Activated naive CD4-positive, alpha-beta T cell treated with anti-CD3 and anti-CD28 coated beads for 36 hours (primary cell): ENCODE measurements at regions of chr10 and their contacts with region 1.

Region 1: GRCh38 chr10:14185316-14186045 is 145.2 kb downstream of the FRMD4A start:
- DNase-seq: peak; percentile 73
- H3K4me3 Mint-ChIP-seq: peak overlapping the region; percentile 61
- H3K27ac Mint-ChIP-seq: peak overlapping the region; percentile 96
- H3K4me1 Mint-ChIP-seq: peaks cover 29% of the 10 kb centered on the region
- H3K27me3 Mint-ChIP-seq: peaks cover 27% of the 10 kb centered on the region

Region 2: DNA sequence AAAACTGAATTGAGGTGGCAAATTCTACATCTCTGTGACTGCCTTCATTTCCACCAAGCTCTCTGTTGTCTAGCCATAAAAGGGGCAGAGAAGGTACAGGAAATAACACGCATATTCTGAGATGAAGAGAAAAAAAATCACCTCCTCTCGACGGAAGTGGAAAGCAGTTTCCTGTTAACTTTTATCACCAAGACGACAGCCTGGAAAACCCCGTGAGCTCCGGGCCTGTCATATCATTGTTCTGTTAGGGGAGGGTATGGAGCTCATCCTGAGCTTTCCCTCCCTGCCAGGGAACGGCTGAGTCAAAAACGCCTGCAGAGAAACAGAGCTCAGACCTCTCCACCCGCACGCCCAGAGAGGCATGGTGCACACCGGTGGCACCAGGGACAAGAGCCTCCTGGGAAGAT is 398.5 kb before region 1 on chr10:
- CTCF ChIA-PET with region 1: interaction called, 6 read pairs
- intact Hi-C with region 1: loop called (anchors 1 kb)
- DNase-seq: peak; percentile 92
- H3K4me3 Mint-ChIP-seq: peak overlapping the region; percentile 45
- H3K27ac Mint-ChIP-seq: peak overlapping the region; percentile 93
- H3K4me1 Mint-ChIP-seq: peaks cover 33% of the 10 kb centered on the region
- H3K27me3 Mint-ChIP-seq: no peaks in the 10 kb centered on the region

Region 3: DNA sequence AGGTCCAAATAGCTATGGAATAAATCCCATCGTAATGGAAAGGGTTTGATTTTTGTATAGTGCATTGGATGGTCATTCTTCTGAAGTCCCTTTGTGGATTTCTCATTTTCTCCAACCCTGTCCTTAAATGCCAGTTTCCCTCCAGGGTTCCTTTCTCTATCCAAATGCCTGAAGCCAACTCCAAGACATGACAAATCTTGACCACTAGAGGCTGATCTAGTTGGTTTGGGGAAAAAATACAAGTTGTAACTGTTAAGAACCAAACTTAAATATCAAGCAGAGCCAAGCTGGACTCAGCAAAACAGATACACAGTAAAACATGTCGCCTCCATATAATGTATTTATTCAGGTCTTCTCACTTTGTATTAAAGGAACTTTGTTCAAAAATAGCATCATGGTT is 116.6 kb after region 1 on chr10:
- CTCF ChIA-PET with region 1: no interaction called
- intact Hi-C with region 1: no loop called
- DNase-seq: no peak
- H3K4me3 Mint-ChIP-seq: no peak overlapping the region
- H3K27ac Mint-ChIP-seq: no peak overlapping the region
- H3K4me1 Mint-ChIP-seq: no peaks in the 10 kb centered on the region
- H3K27me3 Mint-ChIP-seq: peaks cover 6% of the 10 kb centered on the region

Region 4: GRCh38 chr10:14385596-14386593 is 200.4 kb after region 1 on chr10:
- CTCF ChIA-PET with region 1: interaction called, 5 read pairs
- intact Hi-C with region 1: loop called (anchors 1 kb)
- DNase-seq: peak; percentile 67
- H3K4me3 Mint-ChIP-seq: no peak overlapping the region
- H3K27ac Mint-ChIP-seq: no peak overlapping the region
- H3K4me1 Mint-ChIP-seq: peaks cover 80% of the 10 kb centered on the region
- H3K27me3 Mint-ChIP-seq: peaks cover 3% of the 10 kb centered on the region

Region 5: DNA sequence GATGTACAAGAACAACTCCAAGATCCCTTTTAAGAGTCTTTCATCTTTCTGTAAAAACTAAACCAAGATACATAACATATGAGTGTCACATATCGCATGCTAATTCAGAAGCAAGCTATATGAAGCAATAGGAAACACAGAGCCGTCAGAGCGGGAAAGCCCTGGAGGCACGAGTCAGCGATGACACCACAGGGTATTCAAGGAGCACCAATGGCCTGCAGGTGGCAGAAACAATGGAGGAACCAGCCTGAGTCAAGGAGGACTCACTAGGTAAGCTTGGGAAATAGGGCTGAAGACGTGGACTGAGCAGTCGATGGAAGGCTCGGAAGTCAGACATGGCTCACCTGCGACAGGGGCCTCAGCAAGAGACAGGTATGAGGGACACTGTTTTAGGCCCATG is 374.8 kb after region 1 on chr10:
- CTCF ChIA-PET with region 1: no interaction called
- intact Hi-C with region 1: loop called (anchors 2 kb)
- DNase-seq: peak; percentile 94
- H3K4me3 Mint-ChIP-seq: peak overlapping the region; percentile 13
- H3K27ac Mint-ChIP-seq: peak overlapping the region; percentile 88
- H3K4me1 Mint-ChIP-seq: peaks cover 91% of the 10 kb centered on the region
- H3K27me3 Mint-ChIP-seq: no peaks in the 10 kb centered on the region

Region 6: DNA sequence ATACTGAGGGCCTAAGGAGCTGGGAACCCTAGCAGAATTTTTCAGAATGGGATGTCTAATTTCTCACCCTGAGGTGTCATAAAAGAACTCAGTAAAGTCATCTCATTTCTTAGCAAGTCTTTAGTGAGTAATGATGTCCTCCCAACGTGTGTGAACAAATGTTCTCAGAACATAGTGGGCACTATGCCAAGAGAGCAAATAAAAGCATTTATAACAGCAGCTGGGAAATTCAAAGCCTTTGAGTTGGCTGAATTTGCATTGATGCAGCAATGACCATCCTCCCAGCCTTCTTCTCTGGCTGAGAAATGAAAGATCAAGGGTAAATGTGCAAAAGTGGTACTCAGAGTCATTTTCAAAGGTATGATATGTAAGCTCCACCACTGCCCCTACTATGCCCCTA is 479.8 kb after region 1 on chr10:
- CTCF ChIA-PET with region 1: no interaction called
- intact Hi-C with region 1: loop called (anchors 5 kb)
- DNase-seq: peak; percentile 65
- H3K4me3 Mint-ChIP-seq: no peak overlapping the region
- H3K27ac Mint-ChIP-seq: peak overlapping the region; percentile 78
- H3K4me1 Mint-ChIP-seq: peaks cover 53% of the 10 kb centered on the region
- H3K27me3 Mint-ChIP-seq: no peaks in the 10 kb centered on the region

Region 7: DNA sequence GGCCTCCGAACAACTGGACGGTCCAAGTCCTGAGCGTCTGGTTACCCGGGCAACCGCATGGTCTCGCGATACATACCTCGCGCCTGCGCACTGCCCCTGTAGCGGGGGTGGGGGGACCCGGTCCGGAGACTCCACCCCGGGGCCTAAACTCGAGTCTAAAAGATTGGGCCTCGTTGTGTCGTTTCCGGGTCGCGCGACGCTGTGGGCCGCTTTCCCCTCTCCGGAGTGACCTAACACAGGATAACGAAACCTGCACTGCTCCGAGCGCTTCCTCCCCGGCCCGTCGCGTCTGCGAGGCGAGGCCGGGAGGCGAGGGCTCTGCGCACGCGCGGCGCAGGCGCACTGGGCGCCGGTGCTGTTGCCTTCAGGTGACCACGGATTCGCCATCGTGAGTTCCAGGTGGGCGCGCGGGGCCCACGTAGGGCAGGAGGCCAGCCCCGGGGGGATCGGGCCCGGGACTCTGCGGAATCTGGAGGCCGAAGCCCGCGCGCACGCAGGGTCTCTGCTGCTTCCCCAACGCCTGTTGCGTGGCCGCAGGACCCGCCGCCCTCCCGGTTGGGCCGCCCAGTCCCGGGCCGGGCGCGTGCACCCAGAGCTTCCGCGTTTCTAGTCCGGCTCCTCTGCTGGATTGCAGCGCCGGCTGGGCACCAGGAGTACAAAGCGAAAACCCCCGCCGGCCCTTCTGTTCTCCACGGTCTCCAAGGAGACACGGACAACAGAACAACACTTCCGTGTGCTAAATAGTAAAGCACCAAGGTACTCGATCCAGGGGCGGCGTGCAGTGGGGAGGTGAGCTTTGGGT is 911.7 kb after region 1 on chr10 and contains the start of gene RPP38:
- CTCF ChIA-PET with region 1: no interaction called
- intact Hi-C with region 1: loop called (anchors 10 kb)
- DNase-seq: peak; percentile 96
- H3K4me3 Mint-ChIP-seq: peak within 1 kb of the TSS; percentile 97
- H3K27ac Mint-ChIP-seq: peak within 1 kb of the TSS; percentile 94
- H3K4me1 Mint-ChIP-seq: peaks cover 36% of the 10 kb centered on the region
- H3K27me3 Mint-ChIP-seq: no peaks in the 10 kb centered on the region
- total RNA-seq, gene RPP38: 15.6 to 16.3 TPM